Heart left ventricle (tissue), 16 donors: ENCODE measurements at regions of chr14 and their contacts with region 1.

Region 1: GRCh38 chr14:61420326-61420725 is 98.9 kb downstream of the PRKCH start:
- DNase-seq: no peak
- ATAC-seq: no peak
- H3K4me3 ChIP-seq: no peak overlapping the region
- H3K27ac ChIP-seq: peak overlapping the region in 4 of 12 donors; percentile 5 to 38 (median 26)
- H3K4me1 ChIP-seq: peaks cover 0 to 63% (median 46%) of the 10 kb centered on the region in 12 donors
- H3K27me3 ChIP-seq: no peaks in the 10 kb centered on the region
- CTCF ChIP-seq: no peak
- POLR2A ChIP-seq: no peak

Region 2: DNA sequence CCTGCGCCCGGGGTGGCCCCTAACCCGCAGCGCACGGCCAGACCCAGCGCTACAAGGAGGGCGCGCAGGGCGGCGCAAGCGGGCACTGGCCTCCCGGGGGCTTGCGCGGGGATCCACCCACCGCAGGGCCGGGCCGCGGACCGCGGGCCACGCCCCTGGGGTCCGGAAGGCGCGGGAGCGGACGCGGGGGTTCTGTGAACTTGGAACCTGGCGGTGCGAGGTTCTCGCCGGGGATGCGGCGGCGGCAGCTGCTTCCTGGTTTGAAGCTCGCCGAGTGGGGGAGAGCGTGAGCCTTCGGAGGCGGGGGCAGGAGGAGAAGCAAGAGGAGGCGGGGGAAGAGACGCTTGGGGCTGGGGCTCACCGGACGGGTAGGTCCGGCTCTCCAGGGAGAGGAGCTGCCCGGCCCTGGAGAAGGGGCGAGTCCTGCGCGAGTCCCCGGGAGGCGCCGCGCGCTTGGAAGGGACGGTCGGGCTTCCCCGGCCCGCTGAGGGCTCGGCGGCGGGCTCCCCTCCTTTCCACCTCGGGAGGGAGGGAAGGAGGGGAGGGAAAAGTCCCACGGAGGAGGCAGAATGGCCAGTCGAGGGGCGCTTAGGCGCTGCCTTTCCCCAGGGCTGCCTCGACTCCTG is 98.8 kb before region 1 on chr14 and contains the start of gene PRKCH:
- intact Hi-C with region 1: loop called in 4 of 10 experiments (anchors 2 to 10 kb)
- DNase-seq: peak; percentile 76 to 90 (median 83)
- ATAC-seq: peak; percentile 39 to 81 (median 78)
- H3K4me3 ChIP-seq: peak within 1 kb of the TSS; percentile 63 to 89 (median 77)
- H3K27ac ChIP-seq: peak within 1 kb of the TSS; percentile 75 to 95 (median 89)
- H3K4me1 ChIP-seq: peaks cover 0 to 20% (median 7%) of the 10 kb centered on the region in 12 donors
- H3K27me3 ChIP-seq: peaks cover 0 to 20% (median 4%) of the 10 kb centered on the region in 9 donors
- CTCF ChIP-seq: peak in 7 of 12 donors; percentile 12 to 44 (median 26)
- POLR2A ChIP-seq: peak in 1 of 2 donors; percentile 30
- total RNA-seq, gene PRKCH: 13.2 to 42.1 (median 21.7) TPM

Region 3: DNA sequence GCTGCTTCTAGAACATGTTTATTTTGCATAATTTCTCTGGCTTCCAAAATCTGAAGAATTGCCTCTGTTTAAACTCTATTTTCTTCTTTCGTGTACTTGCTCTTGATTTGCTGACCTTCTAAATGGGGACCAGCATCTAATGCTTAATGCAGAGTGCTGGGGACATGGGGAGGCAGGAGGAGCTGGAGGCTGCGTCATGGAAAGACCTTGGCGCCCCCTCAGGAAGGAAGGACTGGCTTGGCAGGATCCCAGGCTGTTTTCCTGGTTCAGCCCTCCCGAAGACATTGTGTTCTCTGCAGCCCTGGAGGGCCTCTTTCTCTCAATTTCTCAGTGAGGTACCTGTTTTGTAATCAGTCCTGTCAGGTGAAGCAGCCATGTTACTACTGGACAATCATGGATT is 93.5 kb before region 1 on chr14:
- intact Hi-C with region 1: loop called in 4 of 10 experiments (anchors 2 to 10 kb)
- DNase-seq: peak; percentile 78 to 89 (median 83)
- ATAC-seq: peak; percentile 62 to 91 (median 84)
- H3K4me3 ChIP-seq: peak overlapping the region in 8 of 12 donors; percentile 3 to 36 (median 12)
- H3K27ac ChIP-seq: peak overlapping the region; percentile 48 to 88 (median 78)
- H3K4me1 ChIP-seq: peaks cover 0 to 44% (median 26%) of the 10 kb centered on the region in 12 donors
- H3K27me3 ChIP-seq: peaks cover 0 to 10% (median 0%) of the 10 kb centered on the region in 9 donors
- CTCF ChIP-seq: no peak
- POLR2A ChIP-seq: peak in 1 of 2 donors; percentile 41

Region 4: DNA sequence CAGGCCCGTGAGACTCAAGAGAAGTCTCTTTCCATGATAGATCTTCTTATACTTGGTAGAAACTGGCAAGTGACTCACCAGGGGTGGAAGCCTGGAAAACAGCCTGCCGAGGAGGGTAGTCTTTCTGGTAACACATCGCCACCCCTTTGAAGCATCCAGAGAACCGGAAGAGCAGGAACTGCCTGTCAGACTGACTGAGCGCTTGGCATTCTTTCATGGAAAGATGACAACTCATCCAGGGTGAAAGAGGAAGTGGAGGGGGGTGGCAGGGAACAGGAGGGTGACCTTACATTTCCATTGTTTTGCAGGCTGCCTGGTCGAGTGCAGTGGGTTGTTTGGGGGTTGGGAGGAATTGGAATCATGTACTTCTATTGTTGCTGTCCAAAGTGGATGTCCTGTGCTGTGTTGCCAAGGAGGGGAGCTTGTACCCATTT is 64.4 kb before region 1 on chr14:
- intact Hi-C with region 1: loop called in 2 of 10 experiments (anchors 5 to 10 kb)
- DNase-seq: peak in 4 of 5 donors; percentile 45 to 78 (median 64)
- ATAC-seq: peak; percentile 75 to 94 (median 90)
- H3K4me3 ChIP-seq: no peak overlapping the region
- H3K27ac ChIP-seq: peak overlapping the region; percentile 5 to 75 (median 50)
- H3K4me1 ChIP-seq: peaks cover 0 to 61% (median 9%) of the 10 kb centered on the region in 12 donors
- H3K27me3 ChIP-seq: no peaks in the 10 kb centered on the region
- CTCF ChIP-seq: no peak
- POLR2A ChIP-seq: no peak

Region 5: DNA sequence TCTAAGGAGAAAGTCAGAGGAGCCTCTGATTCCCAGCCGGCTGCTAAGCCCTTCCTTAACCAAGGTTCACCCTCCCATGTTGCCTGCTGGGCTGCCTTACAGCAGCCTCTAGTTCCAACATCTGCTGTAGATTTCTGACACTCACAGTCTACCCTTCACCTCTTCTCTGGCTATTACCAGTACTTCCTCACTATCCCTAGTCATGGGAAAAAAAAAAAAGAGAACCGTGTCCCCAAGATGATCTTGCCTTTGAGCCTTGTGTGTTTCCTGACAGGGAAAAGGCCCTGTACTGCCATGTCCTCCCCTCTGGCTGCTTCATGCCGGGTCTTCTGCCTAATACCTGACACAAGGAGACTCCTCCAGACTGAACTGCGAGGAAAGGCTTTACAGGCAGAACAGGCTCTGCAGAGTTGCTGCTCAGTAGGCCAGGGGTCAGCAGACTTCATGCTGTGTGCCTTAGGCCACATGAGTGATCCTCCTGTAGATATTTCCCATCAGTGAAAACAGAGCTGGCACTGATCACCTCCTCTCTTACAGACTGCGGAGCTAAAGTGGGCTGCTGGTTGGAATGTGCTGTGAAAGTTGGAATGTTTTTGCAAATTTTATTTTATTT is 52.1 kb before region 1 on chr14:
- intact Hi-C with region 1: loop called in 2 of 10 experiments (anchors 5 to 10 kb)
- DNase-seq: no peak
- ATAC-seq: peak in 2 of 4 donors; percentile 24 to 47
- H3K4me3 ChIP-seq: no peak overlapping the region
- H3K27ac ChIP-seq: peak overlapping the region in 2 of 12 donors; percentile 18 to 38
- H3K4me1 ChIP-seq: peaks cover 0 to 68% (median 14%) of the 10 kb centered on the region in 12 donors
- H3K27me3 ChIP-seq: no peaks in the 10 kb centered on the region
- CTCF ChIP-seq: no peak
- POLR2A ChIP-seq: no peak

Region 6: DNA sequence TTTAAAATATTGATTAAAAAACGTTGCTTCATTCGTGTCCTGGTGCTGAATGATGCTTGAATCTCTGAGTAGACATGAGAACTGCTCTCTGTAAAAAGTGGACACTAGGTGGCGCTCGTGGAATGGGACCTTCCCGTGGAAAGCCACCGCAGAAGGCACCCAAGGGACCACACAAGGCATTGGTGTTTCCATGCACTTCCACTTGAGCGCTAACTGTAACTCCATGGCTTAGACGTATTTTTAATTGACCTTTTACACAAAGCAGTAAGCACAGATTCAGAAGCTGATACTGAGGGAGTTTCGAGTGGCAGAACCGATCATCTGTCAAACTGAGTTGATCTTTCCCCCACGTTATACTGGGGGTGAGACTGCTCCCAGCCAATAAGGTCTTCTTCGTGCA is 36.4 kb after region 1 on chr14:
- intact Hi-C with region 1: loop called in 1 of 10 experiments (anchors 5 kb)
- DNase-seq: peak in 4 of 5 donors; percentile 81 to 90 (median 85)
- ATAC-seq: peak in 3 of 4 donors; percentile 76 to 83 (median 78)
- H3K4me3 ChIP-seq: no peak overlapping the region
- H3K27ac ChIP-seq: no peak overlapping the region
- H3K4me1 ChIP-seq: peaks cover 0 to 38% (median 13%) of the 10 kb centered on the region in 12 donors
- H3K27me3 ChIP-seq: no peaks in the 10 kb centered on the region
- CTCF ChIP-seq: peak; percentile 78 to 94 (median 88)
- POLR2A ChIP-seq: no peak